B cell (primary cell): ENCODE measurements at regions of chr1 and their contacts with region 1.

Region 1: GRCh38 chr1:41003640-41004220 is 17.8 kb downstream of the SLFNL1 start:
- DNase-seq: peak; percentile 83
- ATAC-seq: peak; percentile 96
- H3K4me3 ChIP-seq: no peak overlapping the region
- H3K4me3 Mint-ChIP-seq: no peak overlapping the region
- H3K27ac ChIP-seq: no peak overlapping the region
- H3K27ac Mint-ChIP-seq: peak overlapping the region; percentile 22
- H3K4me1 ChIP-seq: peaks cover 6 to 13% of the 10 kb centered on the region in 2 donors
- H3K4me1 Mint-ChIP-seq: peaks cover 17% of the 10 kb centered on the region
- H3K27me3 ChIP-seq: no peaks in the 10 kb centered on the region
- H3K27me3 Mint-ChIP-seq: no peaks in the 10 kb centered on the region
- CTCF ChIP-seq: peak; percentile 55

Region 2: GRCh38 chr1:40979233-40980067 is 24.3 kb before region 1 on chr1 and contains the start of gene CTPS1:
- CTCF ChIA-PET with region 1: interaction called, 7 read pairs
- POLR2A ChIA-PET with region 1: no interaction called
- intact Hi-C with region 1: loop called (anchors 1 kb)
- DNase-seq: peak; percentile 97
- ATAC-seq: peak; percentile 86
- H3K4me3 ChIP-seq: peak within 1 kb of the TSS; percentile 45 to 89 (median 82)
- H3K4me3 Mint-ChIP-seq: peak within 1 kb of the TSS; percentile 97
- H3K27ac ChIP-seq: peak within 1 kb of the TSS; percentile 82 to 87
- H3K27ac Mint-ChIP-seq: peak within 1 kb of the TSS; percentile 94
- H3K4me1 ChIP-seq: peaks cover 13 to 18% of the 10 kb centered on the region in 2 donors
- H3K4me1 Mint-ChIP-seq: peaks cover 15% of the 10 kb centered on the region
- H3K27me3 ChIP-seq: no peaks in the 10 kb centered on the region
- H3K27me3 Mint-ChIP-seq: no peaks in the 10 kb centered on the region
- CTCF ChIP-seq: peak; percentile 13
- total RNA-seq, gene CTPS1: 17.9 TPM in 2 replicates

Region 3: GRCh38 chr1:41072051-41072450 is 68.3 kb after region 1 on chr1:
- CTCF ChIA-PET with region 1: no interaction called
- POLR2A ChIA-PET with region 1: no interaction called
- intact Hi-C with region 1: no loop called
- DNase-seq: no peak
- ATAC-seq: no peak
- H3K4me3 ChIP-seq: no peak overlapping the region
- H3K4me3 Mint-ChIP-seq: no peak overlapping the region
- H3K27ac ChIP-seq: no peak overlapping the region
- H3K27ac Mint-ChIP-seq: no peak overlapping the region
- H3K4me1 ChIP-seq: no peaks in the 10 kb centered on the region
- H3K4me1 Mint-ChIP-seq: no peaks in the 10 kb centered on the region
- H3K27me3 ChIP-seq: no peaks in the 10 kb centered on the region
- H3K27me3 Mint-ChIP-seq: no peaks in the 10 kb centered on the region
- CTCF ChIP-seq: no peak